ENCODE measurements at regions of chr14 and their contacts with region 1.

Region 1: GRCh38 chr14:81453166-81453766 is 53.1 kb upstream of the STON2 start:
- DNase-seq: peak; percentile 79
- H3K4me3 ChIP-seq: no peak overlapping the region
- H3K27ac ChIP-seq: no peak overlapping the region
- H3K4me1 ChIP-seq: no peaks in the 10 kb centered on the region
- H3K27me3 ChIP-seq: no peaks in the 10 kb centered on the region
- CTCF ChIP-seq: peak; percentile 91

Region 2: DNA sequence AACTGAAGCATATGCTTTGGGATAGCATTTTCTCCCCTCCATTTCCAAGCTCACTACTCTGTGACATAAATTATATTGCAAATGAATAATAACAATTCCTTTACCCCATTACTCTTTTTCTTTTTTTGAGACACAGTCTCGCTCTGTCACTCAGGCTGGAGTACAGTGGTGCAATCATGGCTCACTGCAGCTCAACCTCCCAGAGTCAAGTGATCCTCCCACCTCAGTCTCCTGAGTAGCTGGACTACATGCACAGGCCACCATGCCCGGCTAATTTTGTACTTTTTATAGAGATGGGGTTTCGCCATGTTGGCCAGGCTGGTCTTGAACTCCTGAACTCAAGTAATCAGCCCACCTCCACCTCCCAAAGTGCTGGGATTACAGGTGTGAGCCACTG is 183.3 kb before region 1 on chr14:
- intact Hi-C with region 1: loop called (anchors 2 kb)
- DNase-seq: no peak
- H3K4me3 ChIP-seq: no peak overlapping the region
- H3K27ac ChIP-seq: no peak overlapping the region
- H3K4me1 ChIP-seq: no peaks in the 10 kb centered on the region
- H3K27me3 ChIP-seq: no peaks in the 10 kb centered on the region
- CTCF ChIP-seq: no peak